A673 (cell line): ENCODE measurements at regions of chr2 and their contacts with region 1.

Region 1: DNA sequence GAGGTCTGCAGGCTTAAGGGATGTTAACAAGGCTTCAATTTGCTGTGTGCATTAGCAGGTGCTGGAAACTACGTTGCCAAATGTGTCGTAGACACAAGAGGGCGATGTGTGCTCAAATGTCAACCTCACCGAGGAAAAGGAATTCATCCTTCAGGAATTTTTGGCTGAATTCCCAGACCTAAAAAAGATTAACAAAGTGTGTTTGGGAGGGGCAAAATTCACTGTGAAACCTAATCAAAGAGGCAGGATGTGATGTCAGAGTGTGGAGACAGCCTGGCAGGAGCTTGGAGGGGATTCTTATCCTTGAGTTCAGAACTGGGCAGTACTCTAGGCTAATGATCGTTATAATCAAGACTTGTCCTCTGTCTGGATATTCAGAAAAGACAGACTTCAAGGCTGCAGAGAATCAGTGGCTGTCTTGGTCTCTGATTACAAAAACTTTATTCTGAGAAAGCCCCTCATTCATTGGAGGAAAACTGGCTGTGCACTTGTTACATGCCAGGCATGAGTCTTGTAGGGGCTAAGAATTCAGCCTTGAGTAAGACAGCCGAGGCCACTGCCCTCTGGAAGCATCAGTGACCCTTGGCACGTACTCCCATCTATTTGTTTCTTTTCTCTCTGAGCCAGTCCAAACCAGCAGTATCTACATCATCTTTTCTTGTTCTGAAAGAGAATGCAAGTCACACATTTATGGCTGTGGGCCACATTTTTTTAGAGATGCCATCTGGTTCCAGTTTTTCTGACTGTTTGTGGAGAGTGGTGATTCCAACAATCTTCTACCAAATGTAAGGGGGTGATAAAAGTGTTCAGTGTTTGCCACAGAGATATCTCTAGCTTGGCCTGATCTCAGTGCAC is 18.7 kb upstream of the SCYGR1 start:
- DNase-seq: peak; percentile 99
- H3K4me3 ChIP-seq: no peak overlapping the region
- H3K27ac ChIP-seq: peak overlapping the region; percentile 95
- H3K4me1 ChIP-seq: peaks cover 30% of the 10 kb centered on the region
- H3K27me3 ChIP-seq: no peaks in the 10 kb centered on the region
- CTCF ChIP-seq: peak; percentile 89

Region 2: GRCh38 chr2:227228061-227228667 is 178.2 kb before region 1 on chr2:
- CTCF ChIA-PET with region 1: no interaction called
- POLR2A ChIA-PET with region 1: no interaction called
- intact Hi-C with region 1: no loop called
- DNase-seq: peak; percentile 48
- H3K4me3 ChIP-seq: no peak overlapping the region
- H3K27ac ChIP-seq: no peak overlapping the region
- H3K4me1 ChIP-seq: peaks cover 10% of the 10 kb centered on the region
- H3K27me3 ChIP-seq: no peaks in the 10 kb centered on the region
- CTCF ChIP-seq: no peak

Region 3: DNA sequence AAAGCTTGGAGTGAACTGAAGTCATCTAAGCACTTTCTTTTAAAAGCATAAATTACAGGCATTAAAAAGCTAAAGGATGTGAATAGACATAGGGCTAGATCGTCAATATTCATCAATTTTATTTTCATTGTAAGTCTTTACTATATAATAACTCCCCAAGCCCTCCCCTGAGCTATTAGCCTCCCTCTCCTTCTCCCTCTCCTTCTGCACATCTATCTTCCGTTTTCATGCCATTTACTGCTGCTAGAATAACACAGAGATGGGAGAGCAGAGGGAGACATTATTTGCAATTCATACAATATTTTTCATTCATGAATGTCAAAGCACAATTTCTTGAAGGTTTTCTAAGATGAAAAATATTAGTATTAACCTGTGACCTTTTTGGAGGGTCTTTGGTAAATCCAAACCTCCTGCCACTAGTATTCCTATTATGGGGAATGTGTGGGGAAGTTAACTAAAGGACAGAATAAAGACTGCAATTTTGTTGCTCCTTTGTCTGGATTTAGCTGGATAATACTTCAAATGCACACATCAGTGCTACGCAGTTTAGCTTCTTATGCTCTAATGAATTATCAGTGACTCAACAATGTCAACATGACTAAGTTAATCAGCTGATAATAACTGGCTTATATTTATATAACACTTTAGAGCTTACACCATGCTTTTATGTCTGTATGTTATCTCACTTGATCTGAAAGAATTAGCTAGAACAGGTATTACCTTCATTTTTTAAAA is 109.6 kb before region 1 on chr2:
- CTCF ChIA-PET with region 1: no interaction called
- POLR2A ChIA-PET with region 1: no interaction called
- intact Hi-C with region 1: no loop called
- DNase-seq: no peak
- H3K4me3 ChIP-seq: no peak overlapping the region
- H3K27ac ChIP-seq: no peak overlapping the region
- H3K4me1 ChIP-seq: no peaks in the 10 kb centered on the region
- H3K27me3 ChIP-seq: no peaks in the 10 kb centered on the region
- CTCF ChIP-seq: no peak

Region 4: GRCh38 chr2:227471924-227472264 is 65.5 kb after region 1 on chr2 and contains the start of gene AGFG1:
- CTCF ChIA-PET with region 1: interaction called, 3 read pairs
- POLR2A ChIA-PET with region 1: no interaction called
- intact Hi-C with region 1: loop called (anchors 5 kb)
- DNase-seq: peak; percentile 89
- H3K4me3 ChIP-seq: peak within 1 kb of the TSS; percentile 93
- H3K27ac ChIP-seq: peak within 1 kb of the TSS; percentile 89
- H3K4me1 ChIP-seq: peaks cover 13% of the 10 kb centered on the region
- H3K27me3 ChIP-seq: no peaks in the 10 kb centered on the region
- CTCF ChIP-seq: peak; percentile 97
- total RNA-seq, gene AGFG1: 118 and 122 TPM in 2 replicates

Region 5: DNA sequence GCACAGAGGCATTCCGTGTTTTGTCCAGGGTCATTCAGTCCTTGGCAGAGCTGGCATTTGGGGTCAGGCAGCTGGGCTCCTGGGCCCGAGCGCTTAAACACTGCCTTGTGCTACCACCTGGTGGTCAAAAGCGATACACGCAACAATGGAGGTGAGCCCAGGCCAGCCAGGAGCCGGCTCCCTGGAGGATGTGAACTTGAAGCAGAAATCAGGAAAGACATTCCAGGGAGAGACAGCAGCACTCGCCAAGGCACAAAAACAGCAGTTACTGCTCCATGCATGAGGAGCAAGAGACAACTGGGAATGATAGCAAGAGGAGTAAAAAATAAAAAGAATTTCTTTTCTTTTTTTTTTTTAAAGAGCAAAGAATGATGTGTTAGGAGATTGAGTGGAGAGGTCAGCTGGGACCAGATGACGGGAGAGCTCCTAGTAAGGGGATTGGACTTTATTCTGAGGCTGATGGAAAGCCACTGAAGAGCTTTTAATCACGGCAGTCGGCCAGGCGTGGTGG is 360.0 kb after region 1 on chr2:
- CTCF ChIA-PET with region 1: interaction called, 23 read pairs
- POLR2A ChIA-PET with region 1: no interaction called
- intact Hi-C with region 1: loop called (anchors 1 kb)
- DNase-seq: peak; percentile 79
- H3K4me3 ChIP-seq: no peak overlapping the region
- H3K27ac ChIP-seq: no peak overlapping the region
- H3K4me1 ChIP-seq: peaks cover 9% of the 10 kb centered on the region
- H3K27me3 ChIP-seq: no peaks in the 10 kb centered on the region
- CTCF ChIP-seq: peak; percentile 92

Region 6: DNA sequence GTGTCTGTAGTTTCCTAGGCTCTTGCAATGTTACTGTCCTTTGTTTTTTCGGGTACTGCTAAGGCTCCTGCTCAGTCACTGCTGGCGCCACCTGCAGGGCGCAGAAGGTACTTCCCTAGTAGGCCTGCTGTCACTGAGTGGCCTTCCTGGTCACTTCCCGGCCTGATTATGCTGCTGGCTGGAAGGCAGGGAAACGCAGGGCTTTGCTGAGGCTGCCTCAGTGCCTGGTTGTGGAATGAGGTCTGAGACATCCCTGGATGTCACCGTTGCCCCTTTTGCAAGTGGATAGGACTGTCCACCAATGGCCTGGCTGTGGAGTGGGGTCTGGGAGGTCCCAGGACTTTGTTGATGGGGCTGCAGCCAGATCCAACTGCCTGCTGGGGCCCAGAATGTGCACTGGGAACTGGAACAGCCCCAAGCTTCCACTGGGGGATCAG is 478.1 kb after region 1 on chr2:
- CTCF ChIA-PET with region 1: no interaction called
- POLR2A ChIA-PET with region 1: no interaction called
- intact Hi-C with region 1: loop called (anchors 2 kb)
- DNase-seq: peak; percentile 80
- H3K4me3 ChIP-seq: no peak overlapping the region
- H3K27ac ChIP-seq: no peak overlapping the region
- H3K4me1 ChIP-seq: peaks cover 6% of the 10 kb centered on the region
- H3K27me3 ChIP-seq: no peaks in the 10 kb centered on the region
- CTCF ChIP-seq: peak; percentile 92